ENCODE measurements at regions of chr20 and their contacts with region 1.

Region 1: GRCh38 chr20:28562510-28562898 is 2695.0 kb upstream of the DEFB115 start:
- DNase-seq: peak; percentile 3 to 24 (median 10)
- ATAC-seq: peak; percentile 61; the same call in 2 of the 3 replicates
- H3K4me3 ChIP-seq: no peak overlapping the region
- H3K27ac ChIP-seq: no peak overlapping the region
- H3K4me1 ChIP-seq: no peaks in the 10 kb centered on the region
- H3K27me3 ChIP-seq: no peaks in the 10 kb centered on the region
- CTCF ChIP-seq: no peak
- EP300 ChIP-seq: no peak
- POLR2A ChIP-seq: no peak
- RAD21 ChIP-seq: no peak

Region 2: DNA sequence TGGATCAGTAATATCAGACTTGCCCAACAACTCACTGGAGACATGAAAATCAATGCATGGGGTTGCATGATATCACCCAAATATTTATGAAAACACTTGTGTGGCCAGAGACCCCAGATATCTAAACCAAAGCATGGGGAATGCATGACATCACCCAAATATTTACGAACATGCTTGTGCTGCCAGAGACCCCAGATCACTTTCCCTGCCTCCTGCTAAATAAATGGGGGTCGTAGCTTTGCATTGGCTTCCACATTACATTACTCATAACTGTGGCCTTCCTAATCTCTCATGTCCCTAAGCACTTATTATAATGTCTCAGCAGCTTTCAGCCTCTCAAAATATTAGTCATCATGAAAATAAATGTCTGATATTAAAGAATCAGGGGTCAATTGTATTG is 1857.0 kb after region 1 on chr20:
- CTCF ChIA-PET with region 1: no interaction called
- POLR2A ChIA-PET with region 1: no interaction called
- in situ Hi-C with region 1: loop called (anchors 5 kb)
- intact Hi-C with region 1: no loop called
- DNase-seq: no peak
- ATAC-seq: no peak
- H3K4me3 ChIP-seq: no peak overlapping the region
- H3K27ac ChIP-seq: no peak overlapping the region
- H3K4me1 ChIP-seq: no peaks in the 10 kb centered on the region; a peak in 1 of 5 replicates
- H3K27me3 ChIP-seq: 0 out of 5 replicates have a peak, but pooled peaks cover 0 to 2% of the 10 kb centered on the region in 2 experiments
- CTCF ChIP-seq: no peak
- EP300 ChIP-seq: no peak
- POLR2A ChIP-seq: no peak
- RAD21 ChIP-seq: no peak

Measured in K562 (cell line).